ENCODE measurements at regions of chr10 and their contacts with region 1.

Region 1: GRCh38 chr10:13586676-13587355 is at the start of gene PRPF18:
- DNase-seq: peak; percentile 95
- H3K4me3 ChIP-seq: peak within 1 kb of the TSS; percentile 65 to 91 (median 76)
- H3K27ac ChIP-seq: peak within 1 kb of the TSS; percentile 60 to 78 (median 70)
- H3K4me1 ChIP-seq: peaks cover 0 to 20% (median 15%) of the 10 kb centered on the region in 4 donors
- H3K27me3 ChIP-seq: peaks cover 0 to 4% (median 0%) of the 10 kb centered on the region in 3 donors
- CTCF ChIP-seq: peak; percentile 91 to 95 (median 91)
- EP300 ChIP-seq: no peak
- POLR2A ChIP-seq: no peak
- total RNA-seq, gene PRPF18: 25.8 to 39.3 (median 29.0) TPM

Region 2: GRCh38 chr10:13382703-13383398 is 204.0 kb before region 1 on chr10:
- intact Hi-C with region 1: no loop called
- DNase-seq: peak; percentile 12
- H3K4me3 ChIP-seq: peak overlapping the region in 1 of 4 donors; percentile 20
- H3K27ac ChIP-seq: no peak overlapping the region
- H3K4me1 ChIP-seq: peaks cover 0 to 11% (median 8%) of the 10 kb centered on the region in 4 donors
- H3K27me3 ChIP-seq: peaks cover 0 to 44% (median 13%) of the 10 kb centered on the region in 3 donors
- CTCF ChIP-seq: no peak
- EP300 ChIP-seq: no peak
- POLR2A ChIP-seq: no peak

Region 3: DNA sequence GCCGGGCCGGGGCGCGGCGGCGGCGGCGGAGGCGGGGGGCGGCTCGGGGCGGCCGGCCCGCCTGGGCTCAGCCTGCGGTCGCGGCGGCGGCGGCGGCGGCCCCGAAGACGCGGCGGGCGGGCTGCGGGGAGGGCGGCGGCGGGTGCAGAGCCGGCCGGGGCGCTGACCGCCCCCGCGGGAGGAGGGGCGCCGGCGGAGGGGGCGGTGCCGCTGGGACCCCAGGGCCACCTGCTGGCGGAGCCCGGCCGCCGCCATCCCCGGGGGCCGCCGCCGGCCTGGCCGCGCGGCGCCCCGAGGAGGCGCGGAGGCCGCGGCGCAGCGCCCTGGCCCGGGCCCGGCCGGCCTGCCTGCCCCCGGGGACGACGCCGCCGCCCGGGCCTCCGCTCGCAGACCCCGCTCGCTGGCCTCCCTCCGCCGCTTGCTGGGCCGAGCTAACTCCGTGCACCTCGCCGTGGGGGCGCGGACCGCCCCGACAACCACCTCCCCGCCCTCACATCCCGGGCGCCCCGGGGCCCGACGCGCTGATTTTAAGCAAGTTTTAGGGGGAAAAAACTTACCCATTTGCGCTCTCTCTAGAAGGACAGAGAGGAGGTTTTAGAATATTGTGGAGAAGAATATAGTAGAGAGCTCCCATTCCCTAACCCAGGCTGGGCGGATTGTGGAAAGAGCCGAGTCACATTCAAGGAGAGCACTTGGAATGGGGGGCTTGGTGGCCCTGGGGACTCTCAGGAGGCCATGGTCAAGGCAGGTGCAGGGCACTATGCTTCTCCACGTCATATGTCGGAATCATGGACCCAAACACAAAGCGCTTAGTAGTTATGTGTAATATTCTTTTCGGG is 57.7 kb before region 1 on chr10 and contains the start of gene BEND7:
- intact Hi-C with region 1: loop called (anchors 5 kb)
- DNase-seq: no peak
- H3K4me3 ChIP-seq: peak within 1 kb of the TSS; percentile 55 to 72 (median 68)
- H3K27ac ChIP-seq: peak within 1 kb of the TSS; percentile 81 to 91 (median 86)
- H3K4me1 ChIP-seq: peaks cover 0 to 31% (median 24%) of the 10 kb centered on the region in 4 donors
- H3K27me3 ChIP-seq: no peaks in the 10 kb centered on the region
- CTCF ChIP-seq: no peak
- EP300 ChIP-seq: no peak
- POLR2A ChIP-seq: no peak
- total RNA-seq, gene BEND7: 11.8 to 27.2 (median 24.0) TPM